Calu3 (cell line): ENCODE measurements at regions of chr7 and their contacts with region 1.

Region 1: DNA sequence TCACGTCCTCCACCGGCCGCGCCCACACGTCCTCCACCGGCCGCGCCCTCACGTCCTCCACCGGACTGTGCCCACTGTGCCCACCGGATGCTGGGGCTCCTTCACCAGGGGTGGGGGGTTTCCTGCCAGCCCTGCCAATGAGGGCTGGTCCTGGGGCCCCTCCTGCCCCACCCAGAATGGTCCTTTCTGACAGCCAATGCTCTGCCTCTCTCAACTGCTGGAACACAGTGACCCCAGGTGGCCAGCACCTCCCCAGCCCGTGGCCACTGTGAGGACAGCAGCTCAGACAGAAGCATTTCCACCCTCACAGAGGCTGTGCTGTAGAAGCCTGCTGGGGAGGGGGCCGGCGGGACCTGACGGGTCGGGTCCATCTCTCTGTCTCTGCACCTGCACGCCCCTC is 90.1 kb upstream of the DNAAF5 start:
- DNase-seq: peak; percentile 87
- H3K4me3 Mint-ChIP-seq: peak overlapping the region; percentile 82
- H3K27ac Mint-ChIP-seq: peak overlapping the region; percentile 44
- H3K4me1 Mint-ChIP-seq: peaks cover 21% of the 10 kb centered on the region
- H3K27me3 Mint-ChIP-seq: peaks cover 23% of the 10 kb centered on the region
- CTCF ChIP-seq: peak; percentile 91

Region 2: GRCh38 chr7:480531-481218 is 155.7 kb before region 1 on chr7:
- CTCF ChIA-PET with region 1: no interaction called
- intact Hi-C with region 1: no loop called
- DNase-seq: peak; percentile 55
- H3K4me3 Mint-ChIP-seq: no peak overlapping the region
- H3K27ac Mint-ChIP-seq: no peak overlapping the region
- H3K4me1 Mint-ChIP-seq: peaks cover 8% of the 10 kb centered on the region
- H3K27me3 Mint-ChIP-seq: peaks cover 76% of the 10 kb centered on the region
- CTCF ChIP-seq: no peak

Region 3: DNA sequence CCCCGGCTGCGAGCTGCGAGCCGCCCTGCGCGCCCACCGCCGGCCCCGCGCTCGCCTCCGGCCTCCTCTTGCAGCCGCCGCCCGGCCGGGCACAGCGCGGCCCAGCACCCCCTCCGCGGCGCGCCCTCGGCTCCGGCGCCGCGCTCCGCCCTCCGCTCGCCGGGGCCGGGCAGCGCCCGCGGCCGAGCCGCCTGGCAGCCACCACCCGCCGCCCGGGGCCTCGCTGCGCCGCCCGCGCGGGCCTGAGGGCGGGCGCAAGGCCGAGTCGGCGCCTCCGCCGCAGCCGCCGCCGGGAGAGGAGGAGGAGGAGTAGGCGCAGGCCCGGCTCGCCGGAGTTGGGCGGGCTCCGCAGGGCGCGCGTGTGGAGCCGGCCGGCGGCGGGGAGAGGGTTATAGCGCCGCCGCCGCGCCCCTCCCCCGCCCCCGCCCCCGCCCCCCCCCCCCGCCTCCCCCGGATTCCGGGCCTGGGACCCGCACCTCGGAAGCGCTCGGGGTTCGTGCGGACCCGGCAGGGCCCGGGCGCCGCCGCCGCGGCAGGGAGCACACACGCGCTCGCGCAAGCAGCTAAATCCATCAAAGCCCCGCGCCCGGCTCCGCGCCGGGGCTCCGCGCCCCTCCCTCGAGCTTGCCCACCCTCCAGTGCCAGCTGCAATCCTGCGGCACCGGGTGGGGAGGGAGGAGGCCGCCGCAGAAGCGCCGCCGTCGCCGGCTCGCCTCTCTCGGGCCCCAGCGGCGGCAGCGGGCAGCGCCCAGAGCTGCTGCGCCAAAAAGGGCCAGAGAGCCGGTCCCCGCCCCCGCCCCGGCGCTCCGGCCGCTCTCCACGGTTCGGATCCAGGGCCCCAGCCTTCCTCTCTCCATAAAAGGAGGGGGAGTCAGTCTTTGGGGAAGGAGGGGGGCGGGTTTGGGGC is 116.7 kb before region 1 on chr7 and contains the start of gene PDGFA:
- CTCF ChIA-PET with region 1: no interaction called
- intact Hi-C with region 1: loop called (anchors 10 kb)
- DNase-seq: peak; percentile 80
- H3K4me3 Mint-ChIP-seq: peak within 1 kb of the TSS; percentile 70
- H3K27ac Mint-ChIP-seq: no peak within 1 kb of the TSS
- H3K4me1 Mint-ChIP-seq: peaks cover 9% of the 10 kb centered on the region
- H3K27me3 Mint-ChIP-seq: peaks cover 79% of the 10 kb centered on the region
- CTCF ChIP-seq: no peak
- total RNA-seq, gene PDGFA: 4.5 and 6.4 TPM in 2 replicates

Region 4: GRCh38 chr7:909358-910329 is 273.2 kb after region 1 on chr7:
- CTCF ChIA-PET with region 1: no interaction called
- intact Hi-C with region 1: no loop called
- DNase-seq: no peak
- H3K4me3 Mint-ChIP-seq: no peak overlapping the region
- H3K27ac Mint-ChIP-seq: no peak overlapping the region
- H3K4me1 Mint-ChIP-seq: peaks cover 32% of the 10 kb centered on the region
- H3K27me3 Mint-ChIP-seq: peaks cover 20% of the 10 kb centered on the region
- CTCF ChIP-seq: no peak